ENCODE measurements at regions of chr3 and their contacts with region 1.

Region 1: DNA sequence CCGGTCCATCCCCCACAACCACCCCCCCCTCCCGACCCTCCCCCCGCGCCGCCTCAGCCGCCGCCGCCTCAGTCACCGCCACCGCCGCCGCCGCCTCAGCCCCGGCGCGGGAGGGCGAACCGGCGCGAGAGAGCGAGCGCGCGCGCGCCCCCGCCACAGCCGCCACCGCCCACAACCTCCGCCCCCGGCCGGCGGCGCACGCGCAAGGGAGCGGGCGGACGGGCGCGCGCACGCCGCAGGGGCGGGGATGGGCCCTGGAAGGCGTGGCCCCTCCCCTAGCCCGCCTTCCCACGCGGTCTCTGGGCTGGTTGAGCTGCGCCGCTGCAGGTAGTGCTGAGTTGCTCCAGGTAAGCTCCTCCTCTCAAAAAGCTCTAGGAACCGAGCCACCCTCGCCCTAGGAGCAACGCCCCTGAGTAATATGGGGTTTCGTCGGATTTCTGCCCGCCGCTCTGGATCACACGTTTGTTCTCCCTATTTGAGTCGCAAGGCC is at the start of gene TMCC1:
- DNase-seq: peak; percentile 94
- H3K4me3 ChIP-seq: peak within 1 kb of the TSS; percentile 85
- H3K27ac ChIP-seq: peak within 1 kb of the TSS; percentile 86
- H3K4me1 ChIP-seq: peaks cover 41% of the 10 kb centered on the region
- CTCF ChIP-seq: no peak
- total RNA-seq, gene TMCC1: 24.0 and 31.7 TPM in 2 replicates

Region 2: GRCh38 chr3:129233538-129233937 is 660.1 kb before region 1 on chr3:
- CTCF ChIA-PET with region 1: no interaction called
- POLR2A ChIA-PET with region 1: no interaction called
- intact Hi-C with region 1: no loop called
- DNase-seq: peak; percentile 98
- H3K4me3 ChIP-seq: peak overlapping the region; percentile 45
- H3K27ac ChIP-seq: peak overlapping the region; percentile 86
- H3K4me1 ChIP-seq: peaks cover 65% of the 10 kb centered on the region
- CTCF ChIP-seq: no peak

Region 3: DNA sequence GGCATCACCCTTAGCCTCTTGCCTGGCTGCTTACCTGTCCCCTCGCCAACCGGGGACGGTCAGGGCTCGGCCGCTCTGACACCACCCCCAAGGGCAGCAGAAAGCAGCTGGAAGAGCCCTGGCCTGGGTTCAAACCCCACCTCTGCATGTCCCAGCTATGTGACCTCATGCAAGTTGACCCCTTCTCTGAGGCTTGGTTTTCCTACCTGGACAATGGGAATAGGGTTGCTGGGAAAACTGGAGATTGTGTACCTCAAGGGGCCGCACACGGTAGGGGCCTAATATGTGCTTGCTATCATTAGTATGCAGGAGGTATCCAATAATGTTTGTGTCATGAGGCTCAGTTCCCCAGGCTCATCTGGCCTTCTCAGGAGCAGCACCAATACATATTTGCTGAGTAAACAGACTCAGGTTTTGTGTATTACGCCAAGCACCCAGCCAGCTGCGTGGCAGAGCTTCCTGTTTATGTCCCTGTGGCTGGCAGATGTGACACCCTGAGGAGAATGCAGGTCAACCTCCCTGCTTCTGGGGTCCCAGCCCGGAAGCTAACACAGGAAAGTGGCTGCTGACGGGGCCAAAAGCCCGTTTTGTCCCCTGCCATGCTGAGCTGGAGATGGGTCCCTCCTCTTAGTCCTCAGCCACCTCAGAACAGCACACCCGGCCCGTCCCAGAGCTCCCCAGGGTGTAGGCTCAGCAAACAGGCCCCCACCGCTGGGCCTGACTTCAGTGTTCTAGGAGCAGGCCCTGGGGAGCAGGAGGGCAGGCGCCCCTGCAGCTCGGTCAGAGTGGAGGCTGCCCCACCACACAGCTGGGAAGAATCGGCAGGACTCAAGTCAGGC is 316.9 kb before region 1 on chr3:
- CTCF ChIA-PET with region 1: interaction called, 5 read pairs
- POLR2A ChIA-PET with region 1: interaction called, 5 read pairs
- intact Hi-C with region 1: loop called (anchors 2 kb)
- DNase-seq: peak; percentile 98
- H3K4me3 ChIP-seq: peak overlapping the region; percentile 22
- H3K27ac ChIP-seq: peak overlapping the region; percentile 92
- H3K4me1 ChIP-seq: peaks cover 54% of the 10 kb centered on the region
- CTCF ChIP-seq: no peak

Region 4: DNA sequence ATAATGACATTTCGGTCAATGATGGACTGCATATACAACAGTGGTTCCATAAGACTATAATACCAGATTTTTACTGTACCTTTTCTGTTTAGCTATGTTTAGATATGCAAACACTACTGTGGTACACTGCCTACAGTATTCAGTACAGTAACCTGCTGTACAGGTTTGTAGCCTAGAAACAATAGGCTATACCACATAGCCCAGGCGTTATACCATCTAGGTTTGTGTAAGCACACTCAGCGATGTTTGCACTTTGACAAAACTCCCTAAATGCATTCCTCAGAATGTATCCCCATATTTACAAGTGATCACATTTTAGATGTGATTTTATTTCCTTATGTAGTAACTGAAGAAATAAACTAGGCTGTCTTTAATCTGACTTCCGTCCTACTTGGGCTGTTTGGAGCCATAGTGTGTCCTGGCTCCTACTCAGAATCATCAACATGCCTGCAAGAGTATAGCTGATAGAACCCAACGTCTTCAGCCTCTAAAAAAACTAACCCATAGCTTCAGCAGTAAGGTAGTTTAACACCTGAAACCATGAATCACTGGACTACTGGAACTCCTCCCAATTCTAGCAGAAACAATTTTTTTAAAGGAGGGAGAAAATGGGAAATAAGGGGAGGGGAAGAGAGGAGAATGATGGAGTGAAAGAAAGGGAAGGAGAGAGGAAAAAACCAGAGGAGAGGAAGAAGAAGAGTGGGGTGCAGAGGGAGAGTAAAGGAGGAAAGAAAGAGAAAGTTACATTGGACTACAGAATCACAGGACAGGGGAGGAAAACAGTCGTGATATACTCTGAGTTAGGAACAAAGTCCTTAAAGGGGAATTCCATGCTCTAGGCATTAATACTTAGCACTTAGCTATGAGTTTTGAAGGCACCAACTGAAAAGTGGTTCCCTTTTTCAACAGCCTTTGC is 219.5 kb before region 1 on chr3:
- CTCF ChIA-PET with region 1: no interaction called
- POLR2A ChIA-PET with region 1: interaction called, 10 read pairs
- intact Hi-C with region 1: no loop called
- DNase-seq: no peak
- H3K4me3 ChIP-seq: no peak overlapping the region
- H3K27ac ChIP-seq: no peak overlapping the region
- H3K4me1 ChIP-seq: peaks cover 5% of the 10 kb centered on the region
- CTCF ChIP-seq: no peak

Region 5: DNA sequence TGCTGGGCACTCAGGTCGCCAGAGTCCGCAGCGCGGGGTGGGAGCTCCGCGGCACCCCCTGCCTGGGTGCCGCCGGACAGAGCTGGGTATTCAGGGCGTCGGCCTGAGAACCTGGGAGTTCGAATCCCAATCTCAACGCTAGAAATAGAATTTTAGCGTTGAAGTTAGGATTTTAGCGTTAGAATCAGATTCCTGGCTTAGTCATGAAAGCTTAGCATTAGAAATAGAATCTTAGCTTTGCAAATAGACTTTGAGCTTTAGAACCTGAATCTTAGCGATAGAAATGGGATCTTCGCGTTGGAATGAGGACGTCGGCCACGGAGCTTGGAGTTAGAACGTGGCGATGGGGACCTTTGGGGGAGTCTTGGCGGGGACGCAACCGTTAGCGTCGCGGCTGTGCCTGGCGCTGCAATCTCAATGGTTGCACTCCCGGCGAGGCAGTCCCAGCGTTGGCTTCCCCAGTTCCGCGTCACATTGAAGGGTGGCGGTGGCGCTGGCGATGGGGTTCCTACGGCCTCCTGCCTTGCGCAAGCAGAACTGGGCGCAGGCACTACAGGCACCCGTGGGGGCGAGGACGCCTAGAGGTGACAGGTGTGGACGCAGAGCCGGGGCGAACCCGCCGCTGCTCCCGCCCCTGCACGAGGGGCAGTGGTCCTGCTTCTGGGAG is 81.5 kb after region 1 on chr3:
- CTCF ChIA-PET with region 1: no interaction called
- POLR2A ChIA-PET with region 1: no interaction called
- intact Hi-C with region 1: no loop called
- DNase-seq: no peak
- H3K4me3 ChIP-seq: no peak overlapping the region
- H3K27ac ChIP-seq: no peak overlapping the region
- H3K4me1 ChIP-seq: no peaks in the 10 kb centered on the region
- CTCF ChIP-seq: no peak

Measured in OCI-LY7 (cell line).